Activated B cell treated with CpG ODN at 0.5 μM for 24 hours (primary cell): ENCODE measurements at regions of chr1 and their contacts with region 1.

Region 1: DNA sequence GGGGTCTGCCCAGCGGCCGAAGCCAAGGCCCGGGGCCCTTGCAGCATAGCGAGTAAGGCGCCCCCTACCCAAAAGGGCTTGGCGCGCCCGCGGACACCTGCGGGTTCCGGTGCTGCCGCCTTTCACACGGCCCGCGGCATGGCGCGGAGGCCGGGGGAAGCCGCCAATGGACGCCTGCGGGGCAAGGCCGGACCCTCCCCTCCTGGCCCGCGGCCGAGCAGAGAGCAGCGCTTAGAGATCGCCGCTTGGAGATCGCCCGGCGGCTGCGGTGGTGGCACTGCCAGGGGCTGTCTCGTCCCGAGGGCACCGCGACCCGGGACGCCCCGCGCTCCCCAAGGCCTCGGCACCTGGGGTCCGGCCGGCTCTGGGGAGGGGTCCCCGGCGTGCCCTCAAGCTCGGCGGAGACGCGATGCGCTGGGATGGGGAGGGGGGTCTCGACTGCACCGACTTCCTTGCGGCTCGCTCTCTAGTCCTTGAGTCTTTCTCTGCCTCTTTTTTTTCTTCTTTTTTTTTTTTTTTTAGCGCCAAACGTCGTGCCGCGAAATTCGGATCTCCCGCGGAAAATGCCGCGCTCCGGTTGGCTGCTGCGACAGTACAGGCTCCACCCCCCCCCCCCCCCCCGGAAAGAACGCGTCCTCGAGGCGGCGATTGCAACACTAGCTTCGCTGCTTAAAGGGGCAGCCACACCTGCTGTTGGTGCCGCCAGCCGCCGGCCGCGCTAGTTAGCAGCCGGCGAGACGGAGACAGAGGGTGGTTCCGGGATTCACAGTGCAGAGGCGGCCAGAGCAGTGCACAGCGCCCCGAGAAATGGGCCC is at the start of gene E2F2:
- DNase-seq: peak; percentile 68
- ATAC-seq: peak; percentile 73
- H3K4me3 Mint-ChIP-seq: peak within 1 kb of the TSS; percentile 87
- H3K27ac Mint-ChIP-seq: peak within 1 kb of the TSS; percentile 70
- H3K4me1 Mint-ChIP-seq: peaks cover 86% of the 10 kb centered on the region
- H3K27me3 Mint-ChIP-seq: no peaks in the 10 kb centered on the region
- CTCF ChIP-seq: no peak
- total RNA-seq, gene E2F2: 2.4 and 3.4 TPM in 2 replicates

Region 2: DNA sequence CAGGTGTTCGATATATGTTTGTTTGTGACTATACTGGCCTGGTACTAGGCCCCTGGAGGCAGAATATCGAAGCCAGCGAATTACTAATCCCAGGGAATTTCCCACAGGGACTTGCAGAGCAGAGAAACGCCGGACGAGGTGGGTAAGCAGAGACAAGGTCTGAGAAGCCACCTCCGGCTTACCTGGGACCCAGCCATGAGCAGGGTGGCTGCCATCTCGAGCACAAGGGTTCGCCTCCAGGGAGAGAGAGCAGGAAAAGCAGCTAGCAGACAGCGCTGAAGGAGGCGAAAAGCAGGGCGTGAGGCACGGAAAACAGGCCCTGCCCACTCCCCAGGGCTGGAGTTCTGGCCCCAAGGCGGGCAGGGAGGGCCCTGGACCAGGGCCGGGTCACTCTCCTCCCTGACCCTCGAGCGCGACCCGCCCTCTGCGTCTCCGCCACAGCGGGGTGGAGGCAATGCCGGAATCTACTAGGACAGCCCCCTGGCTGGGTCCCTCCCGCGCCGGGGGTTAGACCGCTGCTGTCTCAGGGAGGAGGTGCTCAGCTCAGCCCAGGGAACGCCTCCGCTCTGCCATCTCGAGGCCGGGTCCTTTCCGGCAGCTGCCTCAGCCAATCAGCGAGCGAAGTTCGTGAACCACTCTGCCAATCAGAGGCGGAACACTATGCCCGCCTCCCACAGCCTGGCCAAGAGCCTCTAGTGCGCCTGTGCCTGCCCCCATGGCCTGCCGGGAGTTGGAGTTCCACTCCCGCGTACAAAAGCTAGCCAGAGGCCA is 163.0 kb before region 1 on chr1:
- CTCF ChIA-PET with region 1: no interaction called
- POLR2A ChIA-PET with region 1: no interaction called
- intact Hi-C with region 1: loop called (anchors 2 kb)
- DNase-seq: peak; percentile 88
- ATAC-seq: peak; percentile 88
- H3K4me3 Mint-ChIP-seq: peak overlapping the region; percentile 97
- H3K27ac Mint-ChIP-seq: peak overlapping the region; percentile 97
- H3K4me1 Mint-ChIP-seq: peaks cover 26% of the 10 kb centered on the region
- H3K27me3 Mint-ChIP-seq: no peaks in the 10 kb centered on the region
- CTCF ChIP-seq: no peak

Region 3: GRCh38 chr1:23567629-23567995 is 36.7 kb after region 1 on chr1:
- CTCF ChIA-PET with region 1: no interaction called
- POLR2A ChIA-PET with region 1: no interaction called
- intact Hi-C with region 1: no loop called
- DNase-seq: no peak
- ATAC-seq: peak; percentile 22
- H3K4me3 Mint-ChIP-seq: peak overlapping the region; percentile 82
- H3K27ac Mint-ChIP-seq: peak overlapping the region; percentile 83
- H3K4me1 Mint-ChIP-seq: peaks cover 60% of the 10 kb centered on the region
- H3K27me3 Mint-ChIP-seq: no peaks in the 10 kb centered on the region
- CTCF ChIP-seq: no peak

Region 4: GRCh38 chr1:23601071-23601967 is 70.4 kb after region 1 on chr1:
- CTCF ChIA-PET with region 1: no interaction called
- POLR2A ChIA-PET with region 1: no interaction called
- intact Hi-C with region 1: no loop called
- DNase-seq: no peak
- ATAC-seq: peak; percentile 26
- H3K4me3 Mint-ChIP-seq: peak overlapping the region; percentile 60
- H3K27ac Mint-ChIP-seq: peak overlapping the region; percentile 89
- H3K4me1 Mint-ChIP-seq: peaks cover 77% of the 10 kb centered on the region
- H3K27me3 Mint-ChIP-seq: no peaks in the 10 kb centered on the region
- CTCF ChIP-seq: no peak